Vagina (tissue), 2 donors: ENCODE measurements at regions of chr5 and their contacts with region 1.

Region 1: GRCh38 chr5:149381987-149382340 is 2.9 kb upstream of the IL17B start:
- DNase-seq: no peak
- H3K4me3 ChIP-seq: peak overlapping the region; percentile 18 to 28
- H3K27ac ChIP-seq: peak overlapping the region; percentile 91
- H3K4me1 ChIP-seq: peaks cover 53% of the 10 kb centered on the region
- H3K27me3 ChIP-seq: no peaks in the 10 kb centered on the region
- CTCF ChIP-seq: peak; percentile 84 to 98 (median 89)
- POLR2A ChIP-seq: no peak

Region 2: DNA sequence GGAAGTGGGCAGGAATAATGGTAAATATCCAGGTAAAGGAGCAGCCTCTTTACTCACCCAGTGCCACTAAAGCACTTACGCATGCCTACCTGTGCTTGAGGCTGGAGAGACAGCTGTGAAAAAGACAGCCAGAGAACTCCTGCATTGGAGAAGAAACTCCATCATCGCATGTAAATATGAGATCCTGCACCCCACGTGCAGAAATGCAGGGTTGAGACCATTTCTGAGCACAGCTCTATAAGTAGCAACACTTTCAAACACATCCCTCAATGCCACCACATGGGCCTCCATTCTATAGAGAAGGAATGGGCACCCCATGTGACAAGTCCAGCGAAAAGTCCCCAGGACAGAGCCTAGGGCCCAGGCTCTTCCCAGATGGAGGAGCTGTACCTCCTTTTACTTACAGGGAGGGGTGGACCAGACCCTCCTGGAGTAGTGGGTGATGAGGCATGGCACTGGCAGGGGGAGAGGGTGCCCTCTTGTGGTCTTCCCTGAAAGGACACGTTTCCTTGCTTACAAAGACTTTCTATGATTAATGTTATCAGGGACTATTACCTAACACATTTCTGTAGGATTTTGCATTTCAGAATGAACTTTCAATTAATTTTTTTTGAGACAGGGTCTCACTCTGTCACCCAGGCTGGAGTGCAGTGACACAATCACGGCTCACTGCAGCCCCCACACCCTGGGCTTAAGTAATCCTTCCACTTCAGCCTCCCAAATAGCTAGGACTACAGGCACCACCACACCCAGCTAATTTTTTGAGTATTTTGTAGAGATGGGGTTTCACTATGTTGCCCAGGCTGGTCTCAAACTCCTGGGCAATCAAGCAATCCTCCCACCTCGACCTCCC is 52.4 kb after region 1 on chr5:
- intact Hi-C with region 1: loop called (anchors 5 kb)
- DNase-seq: no peak
- H3K4me3 ChIP-seq: no peak overlapping the region
- H3K27ac ChIP-seq: peak overlapping the region; percentile 53
- H3K4me1 ChIP-seq: peaks cover 38% of the 10 kb centered on the region
- H3K27me3 ChIP-seq: no peaks in the 10 kb centered on the region
- CTCF ChIP-seq: peak; percentile 62 to 78 (median 72)
- POLR2A ChIP-seq: no peak

Region 3: GRCh38 chr5:149551200-149552037 is 169.5 kb after region 1 on chr5 and contains the start of gene CSNK1A1:
- intact Hi-C with region 1: loop called (anchors 5 kb)
- DNase-seq: peak in 1 of 2 donors; percentile 99
- H3K4me3 ChIP-seq: peak within 1 kb of the TSS; percentile 90 to 91
- H3K27ac ChIP-seq: peak within 1 kb of the TSS; percentile 99
- H3K4me1 ChIP-seq: peaks cover 37% of the 10 kb centered on the region
- H3K27me3 ChIP-seq: no peaks in the 10 kb centered on the region
- CTCF ChIP-seq: peak; percentile 42 to 87 (median 53)
- POLR2A ChIP-seq: peak in 1 of 2 donors; percentile 88
- total RNA-seq, gene CSNK1A1: 223 TPM